Esophagus muscularis mucosa (tissue), 4 donors: ENCODE measurements at regions of chr10 and their contacts with region 1.

Region 1: GRCh38 chr10:27564398-27564797 is 60.3 kb downstream of the RAB18 start:
- DNase-seq: no peak
- H3K4me3 ChIP-seq: no peak overlapping the region
- H3K27ac ChIP-seq: no peak overlapping the region
- H3K4me1 ChIP-seq: no peaks in the 10 kb centered on the region
- H3K27me3 ChIP-seq: no peaks in the 10 kb centered on the region
- CTCF ChIP-seq: no peak
- EP300 ChIP-seq: no peak
- POLR2A ChIP-seq: no peak

Region 2: DNA sequence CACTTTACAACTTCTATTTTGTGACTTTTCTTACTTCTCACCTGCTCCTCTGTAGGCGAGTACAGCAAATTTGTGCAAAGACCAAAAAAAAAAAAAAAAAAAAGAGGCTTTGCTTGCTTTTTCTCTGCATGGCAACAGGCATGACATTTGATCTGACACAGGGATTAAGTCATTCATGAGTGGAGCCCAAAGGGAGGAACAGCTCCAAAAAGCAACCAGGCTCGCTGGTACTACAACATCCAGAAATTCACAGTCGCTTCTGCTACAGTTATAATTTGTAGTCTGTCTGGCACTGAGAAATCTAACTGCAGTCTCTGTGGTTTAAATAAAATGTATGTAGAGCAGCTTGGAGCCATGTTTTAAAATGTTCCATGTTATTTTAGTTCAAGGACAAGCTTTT is 149.5 kb after region 1 on chr10:
- intact Hi-C with region 1: no loop called
- DNase-seq: no peak
- H3K4me3 ChIP-seq: peak overlapping the region in 3 of 4 donors; percentile 26 to 34 (median 32)
- H3K27ac ChIP-seq: peak overlapping the region; percentile 37 to 47 (median 45)
- H3K4me1 ChIP-seq: peaks cover 11 to 59% (median 33%) of the 10 kb centered on the region in 4 donors
- H3K27me3 ChIP-seq: no peaks in the 10 kb centered on the region
- CTCF ChIP-seq: no peak
- EP300 ChIP-seq: no peak
- POLR2A ChIP-seq: no peak

Region 3: DNA sequence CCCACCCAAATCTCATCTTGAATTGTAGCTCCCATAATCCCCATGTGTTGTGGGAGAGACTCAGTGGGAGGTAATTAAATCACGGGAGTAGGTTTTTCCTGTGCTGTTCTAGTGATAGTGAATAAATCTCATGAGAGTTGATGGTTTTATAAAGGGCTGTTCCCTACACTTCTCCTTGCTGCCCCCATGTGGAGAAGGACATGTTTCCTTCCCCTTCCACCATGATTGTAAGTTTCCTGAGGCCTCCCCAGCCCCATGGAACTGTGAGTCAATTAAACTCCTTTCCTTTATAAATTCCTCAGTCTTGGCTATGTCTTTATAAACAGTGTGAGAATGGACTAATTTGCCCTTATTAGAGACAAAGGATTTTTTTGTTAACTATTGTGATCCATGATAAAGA is 229.8 kb after region 1 on chr10:
- intact Hi-C with region 1: loop called (anchors 5 kb)
- DNase-seq: no peak
- H3K4me3 ChIP-seq: no peak overlapping the region
- H3K27ac ChIP-seq: no peak overlapping the region
- H3K4me1 ChIP-seq: no peaks in the 10 kb centered on the region
- H3K27me3 ChIP-seq: no peaks in the 10 kb centered on the region
- CTCF ChIP-seq: peak; percentile 42 to 60 (median 45)
- EP300 ChIP-seq: no peak
- POLR2A ChIP-seq: no peak

Region 4: GRCh38 chr10:28604567-28605536 is 1040.5 kb after region 1 on chr10:
- intact Hi-C with region 1: no loop called
- DNase-seq: no peak
- H3K4me3 ChIP-seq: no peak overlapping the region
- H3K27ac ChIP-seq: no peak overlapping the region
- H3K4me1 ChIP-seq: peaks cover 14 to 50% (median 32%) of the 10 kb centered on the region in 4 donors
- H3K27me3 ChIP-seq: no peaks in the 10 kb centered on the region
- CTCF ChIP-seq: no peak
- EP300 ChIP-seq: no peak
- POLR2A ChIP-seq: no peak